ENCODE measurements at regions of chr5 and their contacts with region 1.

Region 1: GRCh38 chr5:53262348-53262970 is 152.9 kb upstream of the MOCS2 start:
- DNase-seq: no peak
- H3K4me3 ChIP-seq: no peak overlapping the region
- H3K27ac ChIP-seq: no peak overlapping the region
- H3K4me1 ChIP-seq: no peaks in the 10 kb centered on the region
- H3K27me3 ChIP-seq: no peaks in the 10 kb centered on the region
- CTCF ChIP-seq: no peak

Region 2: GRCh38 chr5:53303105-53303504 is 40.6 kb after region 1 on chr5:
- intact Hi-C with region 1: no loop called
- DNase-seq: no peak
- H3K4me3 ChIP-seq: no peak overlapping the region
- H3K27ac ChIP-seq: no peak overlapping the region
- H3K4me1 ChIP-seq: no peaks in the 10 kb centered on the region
- H3K27me3 ChIP-seq: no peaks in the 10 kb centered on the region
- CTCF ChIP-seq: no peak

Region 3: GRCh38 chr5:53386341-53386740 is 123.9 kb after region 1 on chr5:
- intact Hi-C with region 1: no loop called
- DNase-seq: no peak
- H3K4me3 ChIP-seq: no peak overlapping the region
- H3K27ac ChIP-seq: no peak overlapping the region
- H3K4me1 ChIP-seq: no peaks in the 10 kb centered on the region
- H3K27me3 ChIP-seq: no peaks in the 10 kb centered on the region
- CTCF ChIP-seq: no peak

Region 4: DNA sequence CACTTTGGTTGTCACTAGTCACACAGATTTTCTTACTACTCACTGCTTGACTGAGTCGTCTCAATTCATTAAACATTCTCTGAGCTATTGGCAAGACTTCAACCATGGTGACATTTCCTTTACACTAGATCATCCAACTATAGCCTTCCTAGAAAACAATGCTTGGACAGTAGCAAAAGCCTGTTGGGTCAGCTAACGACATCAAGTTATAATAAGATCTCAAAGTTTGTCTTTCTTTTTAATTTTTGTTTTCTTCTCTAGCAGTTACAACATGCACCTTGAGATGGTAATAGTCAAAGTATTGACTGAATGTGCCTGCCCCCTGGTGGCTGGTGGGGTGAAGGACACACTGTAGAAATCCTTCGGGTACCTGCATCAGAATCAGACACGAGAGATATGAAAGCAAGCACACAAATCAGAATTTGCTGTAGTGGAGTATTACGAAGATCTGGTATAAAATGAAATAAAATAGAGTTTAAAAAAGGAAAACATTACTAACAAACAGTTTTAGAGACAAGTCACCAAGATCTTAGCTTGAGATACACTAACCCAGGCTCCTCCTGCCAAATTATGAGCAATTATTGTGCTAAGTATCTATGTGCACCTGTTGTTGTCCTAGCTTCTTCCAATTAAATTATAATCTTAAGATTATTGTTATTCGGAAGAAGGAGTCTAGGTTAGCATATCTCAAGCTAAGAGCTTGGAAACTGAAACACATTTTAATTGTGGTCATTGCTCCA is 966.8 kb after region 1 on chr5:
- intact Hi-C with region 1: loop called (anchors 10 kb)
- DNase-seq: peak; percentile 81
- H3K4me3 ChIP-seq: no peak overlapping the region
- H3K27ac ChIP-seq: no peak overlapping the region
- H3K4me1 ChIP-seq: no peaks in the 10 kb centered on the region
- H3K27me3 ChIP-seq: no peaks in the 10 kb centered on the region
- CTCF ChIP-seq: peak; percentile 96

Measured in colonic mucosa (tissue), 4 donors.